Activated CD4-positive, alpha-beta T cell treated with anti-CD3 and anti-CD28 coated beads for 36 hours (primary cell): ENCODE measurements at regions of chr14 and their contacts with region 1.

Region 1: GRCh38 chr14:81164167-81164774 is 56.5 kb downstream of the GTF2A1 start:
- DNase-seq: peak; percentile 83
- ATAC-seq: peak; percentile 100
- H3K4me3 Mint-ChIP-seq: no peak overlapping the region
- H3K27ac Mint-ChIP-seq: peak overlapping the region; percentile 38
- H3K4me1 Mint-ChIP-seq: peaks cover 20% of the 10 kb centered on the region
- H3K27me3 Mint-ChIP-seq: no peaks in the 10 kb centered on the region

Region 2: GRCh38 chr14:80055667-80056496 is 1108.4 kb before region 1 on chr14:
- CTCF ChIA-PET with region 1: no interaction called
- POLR2A ChIA-PET with region 1: no interaction called
- intact Hi-C with region 1: loop called in 1 of 2 experiments (anchors 10 kb)
- DNase-seq: peak; percentile 6
- ATAC-seq: no peak
- H3K4me3 Mint-ChIP-seq: no peak overlapping the region
- H3K27ac Mint-ChIP-seq: no peak overlapping the region
- H3K4me1 Mint-ChIP-seq: no peaks in the 10 kb centered on the region
- H3K27me3 Mint-ChIP-seq: peaks cover 4% of the 10 kb centered on the region

Region 3: GRCh38 chr14:81018251-81018650 is 146.0 kb before region 1 on chr14:
- CTCF ChIA-PET with region 1: no interaction called
- POLR2A ChIA-PET with region 1: no interaction called
- intact Hi-C with region 1: no loop called
- DNase-seq: no peak
- ATAC-seq: no peak
- H3K4me3 Mint-ChIP-seq: no peak overlapping the region
- H3K27ac Mint-ChIP-seq: no peak overlapping the region
- H3K4me1 Mint-ChIP-seq: no peaks in the 10 kb centered on the region
- H3K27me3 Mint-ChIP-seq: peaks cover 7% of the 10 kb centered on the region